ENCODE measurements at regions of chr18 and their contacts with region 1.

Region 1: GRCh38 chr18:55243857-55244256 is 284.6 kb upstream of the CCDC68 start:
- DNase-seq: no peak
- CTCF ChIP-seq: no peak

Region 2: GRCh38 chr18:55322178-55322735 is 78.4 kb after region 1 on chr18:
- in situ Hi-C with region 1: loop called (anchors 10 kb)
- DNase-seq: peak; percentile 62
- CTCF ChIP-seq: no peak

Measured in GM13977 (cell line).